Heart right ventricle (tissue), 16 donors: ENCODE measurements at regions of chr11 and their contacts with region 1.

Region 1: DNA sequence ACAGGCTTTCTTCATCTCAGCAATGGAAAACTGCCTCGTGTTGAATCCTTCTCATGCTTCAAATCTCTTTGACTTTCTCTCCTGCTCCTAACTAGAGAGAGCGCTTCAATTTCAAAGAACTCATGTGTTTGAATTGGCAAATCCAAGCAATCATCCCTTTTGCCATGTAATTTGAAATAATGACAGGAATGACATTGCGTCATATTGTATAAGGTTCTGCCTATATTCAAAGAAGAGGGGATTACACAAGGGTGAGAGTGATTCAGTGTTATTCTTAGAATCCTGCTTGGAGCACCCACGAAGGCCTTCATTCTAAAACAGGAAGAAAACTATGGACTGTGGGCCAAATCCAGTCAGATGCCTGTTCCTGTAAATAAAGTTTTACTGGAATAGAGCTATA is 720.6 kb downstream of the JRKL start:
- DNase-seq: no peak
- ATAC-seq: no peak
- H3K4me3 ChIP-seq: no peak overlapping the region
- H3K27ac ChIP-seq: no peak overlapping the region
- H3K4me1 ChIP-seq: no peaks in the 10 kb centered on the region
- H3K27me3 ChIP-seq: no peaks in the 10 kb centered on the region
- CTCF ChIP-seq: no peak

Region 2: DNA sequence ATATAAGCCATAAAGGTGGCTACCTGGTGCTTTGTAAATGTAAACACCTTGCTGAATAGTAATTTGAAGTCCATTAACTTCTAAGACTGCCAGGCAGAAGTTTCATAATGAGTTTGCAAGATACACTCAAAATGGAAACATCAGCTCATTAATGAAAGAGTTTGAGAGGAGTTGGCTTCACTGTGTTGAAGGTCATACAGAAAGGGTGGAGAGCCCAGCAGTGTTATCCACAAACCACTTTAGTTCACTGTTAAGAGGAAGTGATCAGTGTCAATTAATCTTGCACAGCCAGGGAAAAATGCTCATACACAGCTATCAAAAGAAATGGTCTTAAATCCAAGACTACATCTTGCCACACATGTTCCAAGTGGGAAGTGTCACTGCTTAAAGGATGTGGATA is 31.1 kb before region 1 on chr11:
- intact Hi-C with region 1: no loop called
- DNase-seq: no peak
- ATAC-seq: no peak
- H3K4me3 ChIP-seq: no peak overlapping the region
- H3K27ac ChIP-seq: no peak overlapping the region
- H3K4me1 ChIP-seq: no peaks in the 10 kb centered on the region
- H3K27me3 ChIP-seq: no peaks in the 10 kb centered on the region
- CTCF ChIP-seq: no peak

Region 3: DNA sequence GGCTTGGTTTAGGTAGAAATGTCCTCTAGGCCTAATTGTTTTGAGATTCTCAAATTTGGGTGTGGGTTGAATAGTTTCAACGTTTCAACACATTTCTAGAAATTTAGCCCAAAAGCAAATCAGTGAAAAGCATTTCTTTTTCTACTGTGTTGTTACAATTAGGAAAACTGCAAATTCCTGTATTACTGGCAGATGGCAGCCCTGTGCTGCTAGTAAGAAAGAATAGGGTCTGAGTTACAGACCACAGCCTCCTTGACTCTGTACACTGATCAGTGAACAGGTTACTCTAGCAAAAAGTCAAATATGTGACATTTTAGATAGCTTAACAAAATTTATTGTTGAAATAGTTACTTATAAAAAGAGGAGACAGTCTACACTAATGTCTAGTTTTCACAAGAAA is 17.6 kb before region 1 on chr11:
- intact Hi-C with region 1: loop called in 1 of 10 experiments (anchors 1 kb)
- DNase-seq: no peak
- ATAC-seq: no peak
- H3K4me3 ChIP-seq: no peak overlapping the region
- H3K27ac ChIP-seq: no peak overlapping the region
- H3K4me1 ChIP-seq: no peaks in the 10 kb centered on the region
- H3K27me3 ChIP-seq: no peaks in the 10 kb centered on the region
- CTCF ChIP-seq: peak in 3 of 9 donors; percentile 14 to 36 (median 19)

Region 4: GRCh38 chr11:97158243-97158642 is 47.9 kb after region 1 on chr11:
- intact Hi-C with region 1: no loop called
- DNase-seq: no peak
- ATAC-seq: peak in 5 of 8 donors; percentile 16 to 83 (median 58)
- H3K4me3 ChIP-seq: no peak overlapping the region
- H3K27ac ChIP-seq: no peak overlapping the region
- H3K4me1 ChIP-seq: no peaks in the 10 kb centered on the region
- H3K27me3 ChIP-seq: no peaks in the 10 kb centered on the region
- CTCF ChIP-seq: no peak

Region 5: GRCh38 chr11:97430877-97431276 is 320.5 kb after region 1 on chr11:
- intact Hi-C with region 1: no loop called
- DNase-seq: no peak
- ATAC-seq: no peak
- H3K4me3 ChIP-seq: no peak overlapping the region
- H3K27ac ChIP-seq: no peak overlapping the region
- H3K4me1 ChIP-seq: no peaks in the 10 kb centered on the region
- H3K27me3 ChIP-seq: no peaks in the 10 kb centered on the region
- CTCF ChIP-seq: no peak

Region 6: DNA sequence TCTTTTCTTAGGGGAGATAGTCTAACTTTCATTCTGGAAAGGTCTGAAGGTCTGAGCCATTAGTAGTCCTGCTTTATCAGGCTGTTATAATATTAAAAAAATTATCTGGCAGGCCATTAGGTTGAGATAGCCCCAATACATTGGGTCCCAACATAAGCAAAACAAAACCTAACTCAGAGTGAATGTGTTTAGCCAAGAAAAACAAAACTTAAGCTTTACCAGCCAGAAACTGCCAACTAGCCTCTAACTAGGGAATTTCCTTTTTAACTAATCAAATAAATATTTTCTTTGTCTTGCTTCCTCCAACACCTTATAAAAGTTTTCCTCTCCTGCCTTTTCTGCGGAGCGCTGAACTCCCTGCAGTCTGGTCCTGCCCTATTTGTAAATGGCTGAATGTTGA is 772.7 kb after region 1 on chr11:
- intact Hi-C with region 1: no loop called
- DNase-seq: no peak
- ATAC-seq: no peak
- H3K4me3 ChIP-seq: no peak overlapping the region
- H3K27ac ChIP-seq: no peak overlapping the region
- H3K4me1 ChIP-seq: no peaks in the 10 kb centered on the region
- H3K27me3 ChIP-seq: no peaks in the 10 kb centered on the region
- CTCF ChIP-seq: no peak